Right ventricle myocardium superior (tissue), 1 donor: ENCODE measurements at regions of chr15 and their contacts with region 1.

Region 1: DNA sequence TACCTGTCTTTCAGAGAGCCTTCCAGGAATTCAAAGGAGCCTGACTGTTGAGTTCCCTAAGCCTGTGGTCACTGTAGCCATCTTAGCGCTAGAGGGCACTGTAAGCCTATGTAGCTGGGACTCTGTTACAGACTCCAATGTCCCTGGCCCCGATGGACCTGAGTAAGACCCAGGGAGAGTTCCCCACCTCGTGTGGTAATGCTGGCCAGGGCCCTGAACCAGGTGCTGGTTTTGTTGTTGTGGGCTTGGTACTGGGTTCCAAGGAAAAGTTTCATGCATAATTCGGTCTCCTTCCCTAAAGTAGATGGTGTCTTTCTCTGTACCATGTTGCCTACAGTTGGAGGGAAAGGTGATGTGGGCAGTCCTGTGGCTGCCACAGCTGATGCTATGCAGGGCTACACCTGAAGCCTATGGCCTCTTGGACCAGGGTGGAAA is 32.4 kb downstream of the CDAN1 start:
- DNase-seq: no peak
- ATAC-seq: peak; percentile 95

Region 2: GRCh38 chr15:42619656-42620371 is 84.7 kb before region 1 on chr15:
- intact Hi-C with region 1: no loop called
- DNase-seq: no peak
- ATAC-seq: no peak

Region 3: DNA sequence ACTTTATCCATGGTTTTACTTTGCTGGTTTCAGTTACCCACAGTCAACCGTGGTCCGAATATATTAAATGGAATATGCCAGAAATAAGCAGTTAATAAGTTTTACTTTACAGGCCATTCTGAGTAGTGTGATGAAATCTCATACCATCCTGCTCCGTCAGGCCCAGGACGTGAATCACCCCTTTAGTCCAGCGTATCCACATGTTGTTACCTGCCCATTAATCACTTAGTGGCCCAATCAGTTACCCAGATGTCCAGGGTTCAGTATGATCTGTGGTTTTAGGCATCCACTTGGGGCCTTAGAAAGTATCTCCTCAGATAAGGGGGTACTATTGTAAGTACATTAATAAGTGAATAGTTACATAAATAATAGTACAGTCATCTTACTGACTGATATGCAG is 128.1 kb after region 1 on chr15:
- intact Hi-C with region 1: no loop called
- DNase-seq: no peak
- ATAC-seq: no peak

Region 4: GRCh38 chr15:42920519-42921227 is 216.2 kb after region 1 on chr15 and contains the start of gene TTBK2:
- intact Hi-C with region 1: loop called (anchors 5 kb)
- DNase-seq: peak; percentile 98
- ATAC-seq: peak; percentile 98
- total RNA-seq, gene TTBK2: 22.4 TPM